ENCODE measurements at regions of chr9 and their contacts with region 1.

Region 1: DNA sequence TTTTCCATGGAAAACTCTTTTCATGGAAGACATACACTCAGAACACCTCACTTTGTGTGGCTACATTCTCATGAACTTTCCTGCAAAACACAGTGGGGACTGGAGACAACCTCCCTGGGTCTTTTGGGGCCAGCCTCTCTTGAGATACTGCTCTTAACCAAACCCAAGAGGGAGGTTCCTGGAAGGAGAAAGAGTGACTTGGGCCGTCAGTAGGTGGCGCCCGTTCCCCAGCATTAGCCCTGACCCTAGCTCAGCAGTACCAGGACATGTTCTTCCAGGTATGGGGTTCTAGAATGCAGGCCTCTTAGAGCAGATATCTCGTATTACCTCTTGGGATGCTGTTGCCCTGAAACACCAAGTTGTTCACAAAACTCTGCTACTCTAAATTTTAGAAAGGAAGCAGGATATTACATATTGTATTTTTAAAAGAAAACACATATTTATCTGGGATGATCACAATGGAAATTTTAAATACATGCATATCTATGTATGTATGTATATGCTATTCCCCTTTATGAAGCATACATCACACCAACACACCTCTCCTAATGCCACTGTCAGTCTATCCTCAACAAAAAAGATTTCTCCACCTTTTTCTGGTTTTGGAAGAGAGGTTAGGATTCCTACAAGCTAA is 15.8 kb upstream of the GLIS3 start:
- DNase-seq: peak; percentile 52 to 68 (median 53)
- ATAC-seq: peak; percentile 96
- H3K4me3 ChIP-seq: no peak overlapping the region
- H3K27ac ChIP-seq: no peak overlapping the region
- H3K4me1 ChIP-seq: no peaks in the 10 kb centered on the region
- H3K27me3 ChIP-seq: peaks cover 0 to 1% of the 10 kb centered on the region in 2 experiments; a peak in 1 of 5 replicates
- CTCF ChIP-seq: peak; percentile 76 to 78 (median 78)
- EP300 ChIP-seq: no peak
- POLR2A ChIP-seq: no peak
- RAD21 ChIP-seq: peak; percentile 39 to 69

Region 2: DNA sequence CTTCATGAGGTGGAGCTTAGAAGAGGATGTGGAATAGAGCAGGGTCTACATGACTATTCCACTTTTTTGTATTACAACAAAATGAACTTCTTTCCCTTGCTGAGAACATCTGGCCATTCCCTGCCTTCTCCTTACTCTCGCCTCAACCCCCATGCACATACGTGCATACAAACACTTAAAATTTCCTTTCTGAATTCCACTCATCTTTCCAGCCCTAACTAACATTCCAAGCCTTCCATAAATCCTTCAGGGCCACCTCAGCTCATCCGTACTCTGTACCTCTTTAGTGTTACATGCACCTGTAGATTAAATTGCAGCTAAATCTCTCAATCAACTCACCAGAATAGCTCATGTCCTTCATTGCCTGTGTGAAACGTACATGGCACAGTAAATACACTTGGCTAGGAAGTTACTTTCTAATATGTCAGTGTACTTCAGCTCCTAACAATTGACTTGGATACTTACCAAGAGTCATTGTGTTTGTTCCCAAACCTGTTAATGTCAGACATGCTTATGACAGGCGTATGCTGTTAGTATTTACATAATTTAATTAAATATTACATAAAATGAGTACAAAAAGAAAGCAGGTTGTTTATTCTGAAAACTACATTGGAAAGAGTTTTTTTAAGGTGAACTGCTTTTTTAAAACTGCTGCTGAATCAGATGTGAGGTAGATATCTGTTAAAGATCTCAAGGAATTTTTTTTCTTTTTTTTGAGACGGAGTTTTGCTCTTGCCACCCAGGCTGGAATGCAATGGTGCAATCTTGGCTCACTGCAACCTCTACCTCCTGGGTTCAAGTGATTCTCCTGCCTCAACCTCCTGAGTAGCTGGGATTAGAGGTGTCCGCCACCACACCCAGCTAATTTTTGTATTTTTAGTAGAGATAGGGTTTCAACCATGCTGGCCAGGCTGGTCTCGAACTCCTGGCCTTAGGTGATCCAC is 71.5 kb before region 1 on chr9:
- CTCF ChIA-PET with region 1: no interaction called
- POLR2A ChIA-PET with region 1: no interaction called
- in situ Hi-C with region 1: no loop called
- intact Hi-C with region 1: no loop called
- DNase-seq: no peak
- ATAC-seq: no peak
- H3K4me3 ChIP-seq: no peak overlapping the region
- H3K27ac ChIP-seq: no peak overlapping the region
- H3K4me1 ChIP-seq: no peaks in the 10 kb centered on the region
- H3K27me3 ChIP-seq: no peaks in the 10 kb centered on the region
- CTCF ChIP-seq: no peak
- EP300 ChIP-seq: no peak
- POLR2A ChIP-seq: no peak
- RAD21 ChIP-seq: no peak

Region 3: GRCh38 chr9:4366591-4367330 is 51.1 kb after region 1 on chr9:
- CTCF ChIA-PET with region 1: interaction called, 5 read pairs
- POLR2A ChIA-PET with region 1: no interaction called
- in situ Hi-C with region 1: no loop called
- intact Hi-C with region 1: loop called (anchors 1 kb)
- DNase-seq: peak; percentile 25 to 40 (median 28)
- ATAC-seq: peak; percentile 58; the same call in 2 of the 3 replicates
- H3K4me3 ChIP-seq: no peak overlapping the region
- H3K27ac ChIP-seq: no peak overlapping the region
- H3K4me1 ChIP-seq: no peaks in the 10 kb centered on the region
- H3K27me3 ChIP-seq: no peaks in the 10 kb centered on the region; a peak in 1 of 5 replicates
- CTCF ChIP-seq: peak; percentile 57 to 71 (median 69)
- EP300 ChIP-seq: no peak
- POLR2A ChIP-seq: no peak
- RAD21 ChIP-seq: peak; percentile 45 to 66; a peak in 3 of 4 replicates

Region 4: DNA sequence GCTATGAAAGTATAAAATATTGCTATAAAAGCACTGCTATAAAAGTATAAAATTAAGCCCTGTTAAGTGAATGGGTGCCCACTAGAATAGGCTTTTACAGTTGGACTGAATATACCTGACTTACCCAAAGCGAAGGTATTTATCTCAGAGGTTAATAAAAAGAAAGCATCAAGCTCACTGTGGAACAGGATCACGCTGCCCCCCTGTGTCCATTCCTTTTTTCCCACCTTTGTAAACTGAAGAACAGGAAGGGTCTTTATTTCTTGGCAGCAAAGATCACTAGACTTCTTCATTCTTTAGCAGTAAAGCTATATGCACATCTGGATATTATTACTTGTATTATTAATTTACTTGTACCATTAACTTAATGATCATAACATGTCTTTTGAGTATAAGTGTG is 324.3 kb after region 1 on chr9:
- CTCF ChIA-PET with region 1: no interaction called
- POLR2A ChIA-PET with region 1: no interaction called
- in situ Hi-C with region 1: no loop called
- intact Hi-C with region 1: loop called (anchors 2 kb)
- DNase-seq: peak; percentile 7 to 16 (median 12)
- ATAC-seq: peak; percentile 41; the same call in 1 of the 3 replicates
- H3K4me3 ChIP-seq: no peak overlapping the region
- H3K27ac ChIP-seq: no peak overlapping the region
- H3K4me1 ChIP-seq: no peaks in the 10 kb centered on the region
- H3K27me3 ChIP-seq: peaks cover 2 to 6% of the 10 kb centered on the region in 2 experiments; a peak in 2 of 5 replicates
- CTCF ChIP-seq: peak; percentile 9 to 37 (median 32); a peak in 3 of 6 replicates
- EP300 ChIP-seq: no peak
- POLR2A ChIP-seq: no peak
- RAD21 ChIP-seq: peak; percentile 9 to 62; a peak in 2 of 4 replicates